OCI-LY7 (cell line): ENCODE measurements at regions of chr17 and their contacts with region 1.

Region 1: DNA sequence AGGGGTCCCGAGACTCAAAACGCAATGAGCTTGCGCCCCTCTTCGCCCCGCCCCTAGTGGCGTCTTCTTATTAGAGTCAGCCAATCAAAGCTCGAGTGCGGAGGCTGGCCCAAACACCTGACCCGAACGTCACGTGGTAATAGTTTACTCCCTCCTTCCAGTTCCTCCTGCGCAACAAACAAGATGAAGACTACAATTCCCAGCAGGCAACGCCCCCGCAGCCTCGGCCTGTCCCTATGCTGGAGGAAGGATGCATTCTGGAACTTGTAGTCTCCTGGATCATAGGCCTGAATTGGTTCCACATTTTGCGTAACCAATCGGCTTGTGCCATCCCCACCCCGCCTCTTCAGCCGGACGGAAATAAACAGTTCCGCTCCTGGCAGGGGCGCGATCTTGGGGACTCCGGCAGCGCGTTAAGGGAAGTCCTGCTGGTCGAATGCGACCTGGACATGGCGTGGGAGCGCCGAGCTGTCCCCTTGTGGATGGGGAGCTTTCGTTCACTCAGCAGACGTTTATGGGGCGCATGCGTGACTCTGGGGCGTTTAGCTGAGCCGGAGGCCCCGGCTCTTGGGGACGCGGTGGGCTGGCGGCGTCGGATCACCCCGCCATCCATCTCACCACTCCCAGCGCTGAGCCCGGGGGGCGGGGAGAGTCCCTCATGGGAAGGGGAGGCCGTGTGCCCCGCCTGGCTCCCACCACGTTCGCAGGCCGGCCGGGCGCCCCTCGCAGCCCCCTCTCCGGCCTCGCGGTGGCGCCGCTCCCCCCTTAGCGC is at the start of gene WBP2:
- DNase-seq: peak; percentile 100
- H3K4me3 ChIP-seq: peak within 1 kb of the TSS; percentile 78
- H3K27ac ChIP-seq: peak within 1 kb of the TSS; percentile 78
- H3K4me1 ChIP-seq: peaks cover 33% of the 10 kb centered on the region
- CTCF ChIP-seq: peak; percentile 92
- total RNA-seq, gene WBP2: 24.1 and 29.9 TPM in 2 replicates

Region 2: DNA sequence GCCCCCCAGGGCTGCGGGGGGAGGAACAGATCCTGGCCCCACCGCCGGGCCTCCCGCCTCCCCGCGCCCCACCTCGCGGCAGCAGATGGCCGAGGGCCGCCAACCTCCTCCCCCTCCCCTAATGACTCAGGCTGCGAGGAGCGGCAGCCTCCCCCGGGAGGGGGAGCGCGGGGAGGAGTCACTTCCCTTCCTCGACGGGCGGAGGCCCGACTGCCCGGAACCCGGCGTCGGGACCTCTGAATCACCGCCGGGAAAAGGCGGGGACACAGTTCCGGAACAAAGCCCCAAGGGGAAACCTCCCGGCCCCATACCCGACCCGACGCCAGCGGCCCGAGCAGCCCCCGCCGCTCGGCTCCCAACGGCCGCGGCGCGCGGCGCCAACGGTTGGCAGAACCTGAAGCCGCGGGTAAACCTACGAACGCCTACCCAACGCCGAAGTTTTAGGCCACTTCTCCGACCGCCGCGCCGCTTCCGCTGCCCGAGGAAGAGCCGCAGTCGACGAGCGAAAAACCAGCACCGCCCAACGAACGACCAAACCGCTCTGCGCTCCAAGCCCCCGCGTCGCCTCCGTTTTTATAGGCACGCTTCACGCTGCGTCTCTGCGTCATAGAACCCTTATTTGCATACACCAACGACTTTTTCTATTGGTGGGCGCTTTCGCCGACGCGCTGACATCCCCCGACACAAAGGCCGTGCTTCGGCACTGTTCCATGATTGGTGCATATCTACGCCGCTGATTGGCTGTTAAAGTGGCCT is 76.1 kb before region 1 on chr17:
- CTCF ChIA-PET with region 1: interaction called, 4 read pairs
- POLR2A ChIA-PET with region 1: interaction called, 20 read pairs
- intact Hi-C with region 1: loop called (anchors 1 kb)
- DNase-seq: peak; percentile 100
- H3K4me3 ChIP-seq: peak overlapping the region; percentile 83
- H3K27ac ChIP-seq: peak overlapping the region; percentile 84
- H3K4me1 ChIP-seq: peaks cover 45% of the 10 kb centered on the region
- CTCF ChIP-seq: peak; percentile 71

Region 3: GRCh38 chr17:75877752-75878173 is 22.3 kb after region 1 on chr17:
- CTCF ChIA-PET with region 1: interaction called, 17 read pairs
- POLR2A ChIA-PET with region 1: interaction called, 28 read pairs
- intact Hi-C with region 1: loop called (anchors 1 kb)
- DNase-seq: peak; percentile 91
- H3K4me3 ChIP-seq: peak overlapping the region; percentile 71
- H3K27ac ChIP-seq: peak overlapping the region; percentile 82
- H3K4me1 ChIP-seq: peaks cover 35% of the 10 kb centered on the region
- CTCF ChIP-seq: peak; percentile 73

Region 4: DNA sequence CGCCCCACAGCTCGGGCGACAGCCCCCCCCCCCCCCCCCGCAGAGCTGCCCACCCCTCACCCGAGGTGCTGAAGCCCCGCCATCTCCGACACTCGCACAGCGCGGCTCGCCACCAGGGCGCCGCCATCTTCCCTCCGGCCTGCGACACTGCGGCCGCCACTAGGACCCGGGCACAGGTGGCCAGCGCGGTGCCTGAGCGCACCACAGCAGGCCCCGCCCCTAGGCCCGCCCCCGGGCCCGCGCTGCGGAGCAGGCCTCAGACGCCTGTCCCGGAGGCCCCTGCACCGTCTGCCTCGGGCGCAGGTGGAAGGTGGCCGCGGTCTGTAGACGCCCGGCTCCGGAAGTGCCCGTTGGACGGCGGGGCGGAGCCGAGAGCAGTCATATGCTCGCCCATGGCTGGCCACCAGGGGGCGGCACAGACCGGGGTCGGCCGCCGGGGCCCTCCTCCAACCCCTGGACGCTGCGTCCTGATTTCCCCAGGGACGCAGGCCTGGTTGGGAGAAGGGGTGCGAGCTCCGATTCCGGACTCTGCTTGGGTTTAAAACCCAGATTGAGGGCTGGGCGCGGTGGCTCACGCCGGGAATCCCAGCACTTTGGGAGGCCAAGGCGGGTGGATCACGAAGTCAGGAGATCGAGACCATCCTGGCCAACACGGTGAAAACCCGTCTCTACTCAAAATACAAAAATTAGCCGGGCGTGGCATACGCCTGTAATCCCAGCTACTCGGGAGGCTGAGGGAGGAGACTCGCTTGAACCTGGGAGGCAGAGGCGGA is 49.4 kb after region 1 on chr17 and contains the start of gene MRPL38:
- CTCF ChIA-PET with region 1: no interaction called
- POLR2A ChIA-PET with region 1: interaction called, 9 read pairs
- intact Hi-C with region 1: loop called (anchors 2 kb)
- DNase-seq: peak; percentile 99
- H3K4me3 ChIP-seq: peak within 1 kb of the TSS; percentile 76
- H3K27ac ChIP-seq: peak within 1 kb of the TSS; percentile 38
- H3K4me1 ChIP-seq: peaks cover 37% of the 10 kb centered on the region
- CTCF ChIP-seq: peak; percentile 95
- total RNA-seq, gene MRPL38: 91.9 and 112 TPM in 2 replicates

Region 5: DNA sequence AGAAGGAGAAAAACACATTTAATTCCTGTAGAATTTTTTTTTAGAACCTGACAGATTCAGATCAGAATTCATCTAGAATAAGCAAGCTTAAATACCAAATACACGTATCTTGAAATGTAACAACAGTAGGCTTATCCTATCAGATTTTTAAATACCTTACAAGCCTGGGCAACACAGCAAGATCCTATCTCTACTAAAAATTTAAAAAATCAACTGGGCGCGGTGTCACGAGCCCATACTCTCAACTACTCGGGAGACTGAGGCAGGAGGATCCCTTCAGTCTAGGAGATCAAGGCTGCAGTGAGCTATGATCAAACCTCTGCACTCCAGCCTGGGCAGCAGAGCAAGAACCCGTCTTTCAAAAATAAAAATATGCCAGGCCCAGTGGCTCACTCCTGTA is 110.0 kb after region 1 on chr17:
- CTCF ChIA-PET with region 1: no interaction called
- POLR2A ChIA-PET with region 1: no interaction called
- intact Hi-C with region 1: no loop called
- DNase-seq: no peak
- H3K4me3 ChIP-seq: no peak overlapping the region
- H3K27ac ChIP-seq: no peak overlapping the region
- H3K4me1 ChIP-seq: peaks cover 4% of the 10 kb centered on the region
- CTCF ChIP-seq: no peak

Region 6: GRCh38 chr17:76014184-76014924 is 158.9 kb after region 1 on chr17:
- CTCF ChIA-PET with region 1: interaction called, 12 read pairs
- POLR2A ChIA-PET with region 1: no interaction called
- intact Hi-C with region 1: loop called (anchors 5 kb)
- DNase-seq: peak; percentile 93
- H3K4me3 ChIP-seq: no peak overlapping the region
- H3K27ac ChIP-seq: no peak overlapping the region
- H3K4me1 ChIP-seq: peaks cover 14% of the 10 kb centered on the region
- CTCF ChIP-seq: peak; percentile 99